Ascending aorta (tissue), 2 donors: ENCODE measurements at regions of chr10 and their contacts with region 1.

Region 1: GRCh38 chr10:47024399-47025252 is 113.4 kb downstream of the PTPN20 start:
- DNase-seq: peak in 1 of 2 donors; percentile 68
- H3K4me3 ChIP-seq: no peak overlapping the region
- H3K27ac ChIP-seq: no peak overlapping the region
- H3K4me1 ChIP-seq: no peaks in the 10 kb centered on the region
- H3K27me3 ChIP-seq: no peaks in the 10 kb centered on the region
- CTCF ChIP-seq: peak; percentile 67 to 78 (median 73)

Region 2: GRCh38 chr10:47047671-47048525 is 23.3 kb after region 1 on chr10:
- intact Hi-C with region 1: loop called (anchors 2 kb)
- DNase-seq: peak in 1 of 2 donors; percentile 85
- H3K4me3 ChIP-seq: no peak overlapping the region
- H3K27ac ChIP-seq: peak overlapping the region in 1 of 2 donors; percentile 82
- H3K4me1 ChIP-seq: peaks cover 7 to 20% of the 10 kb centered on the region in 2 donors
- H3K27me3 ChIP-seq: no peaks in the 10 kb centered on the region
- CTCF ChIP-seq: peak; percentile 83 to 94 (median 89)

Region 3: DNA sequence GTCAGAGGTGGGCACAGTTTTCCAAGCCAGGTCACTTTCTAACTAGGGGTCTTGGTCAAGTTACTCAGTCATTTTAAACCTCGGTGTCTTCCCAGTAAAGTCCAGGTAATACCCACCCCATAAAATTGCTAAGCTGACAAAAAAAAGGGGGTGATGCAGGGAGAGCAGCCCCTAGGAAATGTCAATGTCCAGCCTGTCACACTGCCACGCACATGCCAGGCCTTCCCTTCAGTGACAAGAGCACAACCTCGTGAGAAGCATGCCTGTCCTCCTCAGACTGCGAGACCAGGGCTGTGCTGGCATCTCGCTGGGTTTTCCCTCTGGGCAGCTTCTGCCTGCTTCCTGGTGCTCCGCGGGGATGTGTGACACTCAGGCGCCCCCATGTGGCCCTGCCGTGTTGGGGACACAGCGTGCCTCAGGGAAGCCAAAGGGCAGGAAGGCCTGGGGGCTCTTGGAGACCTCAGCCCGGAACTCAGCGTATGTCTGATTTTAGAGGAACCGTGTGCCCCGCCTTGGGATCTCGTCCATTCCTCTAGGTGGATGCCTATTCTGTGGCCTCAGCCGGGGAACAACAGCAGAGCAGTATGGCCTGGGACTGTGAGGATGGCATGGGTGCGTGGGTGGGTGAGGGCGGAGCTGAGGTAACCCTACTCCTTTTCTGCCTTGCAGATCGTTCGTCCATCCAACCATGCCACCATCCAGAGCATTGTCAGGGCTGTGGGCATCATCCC is 287.5 kb after region 1 on chr10:
- intact Hi-C with region 1: loop called (anchors 1 kb)
- DNase-seq: peak; percentile 36 to 92
- H3K4me3 ChIP-seq: no peak overlapping the region
- H3K27ac ChIP-seq: no peak overlapping the region
- H3K4me1 ChIP-seq: peaks cover 2% of the 10 kb centered on the region in 2 donors
- H3K27me3 ChIP-seq: no peaks in the 10 kb centered on the region
- CTCF ChIP-seq: peak; percentile 91 to 97 (median 95)

Region 4: GRCh38 chr10:47340608-47341170 is 316.1 kb after region 1 on chr10:
- intact Hi-C with region 1: loop called (anchors 1 kb)
- DNase-seq: peak in 1 of 2 donors; percentile 73
- H3K4me3 ChIP-seq: no peak overlapping the region
- H3K27ac ChIP-seq: no peak overlapping the region
- H3K4me1 ChIP-seq: no peaks in the 10 kb centered on the region
- H3K27me3 ChIP-seq: no peaks in the 10 kb centered on the region
- CTCF ChIP-seq: peak; percentile 66 to 92 (median 87)